WTC11 (cell line): ENCODE measurements at regions of chr2 and their contacts with region 1.

Region 1: DNA sequence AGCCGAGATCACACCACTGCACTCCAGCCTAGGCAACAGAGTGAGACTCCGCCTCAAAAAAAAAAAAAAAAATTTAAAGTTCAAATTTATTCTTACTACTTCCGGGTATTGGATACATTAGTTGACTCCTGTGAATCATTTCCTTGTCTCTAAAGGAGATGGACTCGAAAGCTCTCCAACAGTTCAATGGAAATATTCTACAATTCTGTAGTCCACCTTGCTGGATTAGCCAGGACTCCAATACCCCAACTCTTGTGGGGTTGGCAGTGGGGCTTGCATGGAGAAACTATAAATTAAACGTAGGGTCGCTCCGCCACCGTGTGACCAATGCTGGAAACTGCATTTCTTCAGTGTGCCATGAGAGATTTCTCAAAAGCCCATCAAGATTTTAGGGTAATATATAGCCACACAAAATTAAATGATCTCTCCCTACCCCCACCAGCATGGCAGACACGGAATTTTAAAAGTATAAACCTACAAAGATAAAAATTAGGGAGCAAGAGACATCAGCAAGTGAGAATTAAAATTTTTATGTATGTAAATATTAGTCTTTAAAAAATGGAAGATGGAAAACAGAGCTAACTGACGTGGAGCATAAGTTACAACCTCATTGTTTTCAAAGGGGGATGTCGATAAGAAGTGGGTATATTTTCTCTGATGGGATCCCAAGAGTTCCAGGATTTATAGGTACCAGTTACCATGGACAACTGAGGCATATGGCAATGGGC is 27.8 kb upstream of the GAREM2 start:
- DNase-seq: peak; percentile 74
- ATAC-seq: peak; percentile 76
- H3K4me3 Mint-ChIP-seq: no peak overlapping the region
- H3K27ac Mint-ChIP-seq: no peak overlapping the region
- H3K4me1 Mint-ChIP-seq: peaks cover 4% of the 10 kb centered on the region
- H3K27me3 Mint-ChIP-seq: no peaks in the 10 kb centered on the region
- CTCF ChIP-seq: peak; percentile 65

Region 2: GRCh38 chr2:25951071-25951547 is 194.0 kb before region 1 on chr2:
- CTCF ChIA-PET with region 1: interaction called, 10 read pairs
- POLR2A ChIA-PET with region 1: interaction called, 3 read pairs
- DNase-seq: peak; percentile 78
- ATAC-seq: peak; percentile 86
- H3K4me3 Mint-ChIP-seq: no peak overlapping the region
- H3K27ac Mint-ChIP-seq: peak overlapping the region; percentile 66
- H3K4me1 Mint-ChIP-seq: peaks cover 12% of the 10 kb centered on the region
- H3K27me3 Mint-ChIP-seq: no peaks in the 10 kb centered on the region
- CTCF ChIP-seq: peak; percentile 96

Region 3: GRCh38 chr2:25991965-25992364 is 153.2 kb before region 1 on chr2:
- CTCF ChIA-PET with region 1: interaction called, 19 read pairs
- POLR2A ChIA-PET with region 1: no interaction called
- DNase-seq: no peak
- ATAC-seq: no peak
- H3K4me3 Mint-ChIP-seq: no peak overlapping the region
- H3K27ac Mint-ChIP-seq: no peak overlapping the region
- H3K4me1 Mint-ChIP-seq: no peaks in the 10 kb centered on the region
- H3K27me3 Mint-ChIP-seq: no peaks in the 10 kb centered on the region; the same call in 1 of the 2 replicates
- CTCF ChIP-seq: no peak

Region 4: GRCh38 chr2:26011990-26012856 is 132.9 kb before region 1 on chr2:
- CTCF ChIA-PET with region 1: no interaction called
- POLR2A ChIA-PET with region 1: no interaction called
- DNase-seq: no peak
- ATAC-seq: peak; percentile 80
- H3K4me3 Mint-ChIP-seq: no peak overlapping the region
- H3K27ac Mint-ChIP-seq: peak overlapping the region; percentile 32
- H3K4me1 Mint-ChIP-seq: peaks cover 19% of the 10 kb centered on the region
- H3K27me3 Mint-ChIP-seq: no peaks in the 10 kb centered on the region
- CTCF ChIP-seq: no peak

Region 5: DNA sequence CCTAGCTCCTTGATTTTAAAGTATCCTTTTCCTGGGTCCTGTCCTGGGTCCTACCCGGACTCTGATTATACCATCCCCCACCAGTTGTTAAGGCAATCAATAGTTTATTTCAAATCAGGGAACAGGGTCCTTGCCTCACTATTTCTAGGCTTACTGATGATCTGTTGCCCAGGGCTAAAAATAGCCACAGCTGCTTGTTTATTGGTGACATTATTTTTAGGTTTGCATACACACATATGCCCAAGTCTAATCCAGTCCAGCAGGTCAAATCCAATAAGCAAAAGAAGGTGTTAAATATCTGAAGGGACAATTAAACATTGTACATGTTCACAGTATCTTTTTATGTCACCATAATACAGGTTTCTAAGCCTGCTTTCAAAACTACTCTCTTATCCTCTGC is 45.2 kb before region 1 on chr2:
- CTCF ChIA-PET with region 1: no interaction called
- POLR2A ChIA-PET with region 1: no interaction called
- DNase-seq: no peak
- ATAC-seq: no peak
- H3K4me3 Mint-ChIP-seq: no peak overlapping the region
- H3K27ac Mint-ChIP-seq: peak overlapping the region; percentile 47
- H3K4me1 Mint-ChIP-seq: peaks cover 18% of the 10 kb centered on the region
- H3K27me3 Mint-ChIP-seq: no peaks in the 10 kb centered on the region
- CTCF ChIP-seq: no peak

Region 6: GRCh38 chr2:26235085-26235484 is 90.0 kb after region 1 on chr2:
- CTCF ChIA-PET with region 1: no interaction called
- POLR2A ChIA-PET with region 1: no interaction called
- DNase-seq: no peak
- ATAC-seq: no peak
- H3K4me3 Mint-ChIP-seq: no peak overlapping the region
- H3K27ac Mint-ChIP-seq: no peak overlapping the region
- H3K4me1 Mint-ChIP-seq: no peaks in the 10 kb centered on the region
- H3K27me3 Mint-ChIP-seq: no peaks in the 10 kb centered on the region
- CTCF ChIP-seq: no peak

Region 7: GRCh38 chr2:26292665-26293064 is 147.5 kb after region 1 on chr2:
- CTCF ChIA-PET with region 1: no interaction called
- POLR2A ChIA-PET with region 1: no interaction called
- DNase-seq: no peak
- ATAC-seq: peak; percentile 32; the same call in 1 of the 2 replicates
- H3K4me3 Mint-ChIP-seq: no peak overlapping the region
- H3K27ac Mint-ChIP-seq: peak overlapping the region; percentile 60
- H3K4me1 Mint-ChIP-seq: peaks cover 7% of the 10 kb centered on the region
- H3K27me3 Mint-ChIP-seq: no peaks in the 10 kb centered on the region
- CTCF ChIP-seq: no peak